ENCODE measurements at regions of chr12 and their contacts with region 1.

Region 1: GRCh38 chr12:106223485-106224354 is 24.1 kb downstream of the CKAP4 start:
- DNase-seq: peak; percentile 85
- ATAC-seq: peak; percentile 85
- H3K4me3 Mint-ChIP-seq: no peak overlapping the region
- H3K27ac Mint-ChIP-seq: no peak overlapping the region
- H3K4me1 Mint-ChIP-seq: peaks cover 14% of the 10 kb centered on the region
- H3K27me3 Mint-ChIP-seq: no peaks in the 10 kb centered on the region

Region 2: GRCh38 chr12:105420659-105421240 is 803.0 kb before region 1 on chr12:
- CTCF ChIA-PET with region 1: interaction called, 4 read pairs
- POLR2A ChIA-PET with region 1: no interaction called
- intact Hi-C with region 1: loop called (anchors 1 to 2 kb)
- DNase-seq: peak; percentile 83
- ATAC-seq: peak; percentile 73
- H3K4me3 Mint-ChIP-seq: no peak overlapping the region
- H3K27ac Mint-ChIP-seq: no peak overlapping the region
- H3K4me1 Mint-ChIP-seq: peaks cover 13% of the 10 kb centered on the region
- H3K27me3 Mint-ChIP-seq: peaks cover under 1% of the 10 kb centered on the region

Region 3: DNA sequence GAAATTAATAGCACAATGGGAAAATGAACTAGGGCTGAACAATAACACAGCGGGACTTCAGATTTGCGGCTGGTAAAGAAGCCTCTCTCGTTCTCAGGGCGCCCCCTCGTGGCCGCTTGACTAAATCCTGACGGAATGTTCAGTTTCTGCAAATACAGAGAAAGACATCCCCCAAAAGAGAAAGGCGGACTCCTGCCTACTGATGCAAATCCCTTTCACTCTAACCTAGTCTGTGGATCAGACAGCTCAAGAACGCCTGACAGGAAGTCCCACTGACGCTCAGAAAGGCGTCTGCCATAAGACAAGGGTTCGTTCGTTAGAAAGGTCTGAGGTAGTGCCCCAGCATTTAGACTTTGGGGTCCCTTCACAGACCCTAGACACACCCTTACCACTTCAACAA is 87.5 kb before region 1 on chr12:
- CTCF ChIA-PET with region 1: no interaction called
- POLR2A ChIA-PET with region 1: no interaction called
- intact Hi-C with region 1: no loop called
- DNase-seq: peak; percentile 88
- ATAC-seq: peak; percentile 47
- H3K4me3 Mint-ChIP-seq: no peak overlapping the region
- H3K27ac Mint-ChIP-seq: no peak overlapping the region
- H3K4me1 Mint-ChIP-seq: peaks cover 7% of the 10 kb centered on the region
- H3K27me3 Mint-ChIP-seq: peaks cover 62% of the 10 kb centered on the region

Region 4: DNA sequence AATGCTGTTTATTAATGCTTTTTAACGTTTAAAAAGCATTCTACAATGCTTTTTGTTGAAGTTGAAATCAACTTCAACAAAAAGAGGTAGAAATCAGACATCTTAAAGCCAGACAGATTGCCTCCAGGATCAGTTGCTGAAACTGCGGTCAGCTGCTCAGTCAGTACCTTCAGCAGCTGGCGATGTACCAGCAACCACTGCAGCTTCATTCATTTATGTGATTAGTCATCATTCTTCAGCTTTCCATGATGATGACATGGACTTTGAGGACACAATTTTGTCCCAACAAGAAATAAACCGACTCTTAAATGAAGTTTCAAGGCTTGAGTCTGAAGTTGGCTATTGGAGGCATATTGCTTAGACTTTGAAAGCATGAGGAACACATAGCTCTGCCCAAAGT is 53.4 kb before region 1 on chr12:
- CTCF ChIA-PET with region 1: interaction called, 10 read pairs
- POLR2A ChIA-PET with region 1: no interaction called
- intact Hi-C with region 1: loop called in 1 of 2 experiments (anchors 2 kb)
- DNase-seq: no peak
- ATAC-seq: no peak
- H3K4me3 Mint-ChIP-seq: no peak overlapping the region
- H3K27ac Mint-ChIP-seq: no peak overlapping the region
- H3K4me1 Mint-ChIP-seq: peaks cover 7% of the 10 kb centered on the region
- H3K27me3 Mint-ChIP-seq: peaks cover 18% of the 10 kb centered on the region

Region 5: DNA sequence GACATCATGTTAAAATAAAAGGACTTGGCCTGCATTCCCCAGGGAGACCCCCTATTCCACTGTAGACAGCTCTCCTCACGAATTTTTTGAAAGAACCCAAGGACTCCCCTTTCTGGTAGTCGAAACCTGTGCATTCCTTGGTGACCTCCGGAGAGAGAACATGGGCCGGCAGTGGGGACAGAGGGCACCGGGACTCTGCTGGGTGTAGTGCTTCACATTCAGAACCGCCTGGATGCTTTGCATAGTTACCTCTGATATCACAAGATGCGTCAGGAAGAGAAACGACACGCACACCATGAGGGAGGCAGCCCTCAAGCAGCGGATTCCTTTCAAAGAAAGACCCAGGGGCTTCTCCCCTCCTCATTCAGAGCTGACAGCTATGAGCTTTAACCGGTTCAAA is 14.4 kb after region 1 on chr12:
- CTCF ChIA-PET with region 1: interaction called, 15 read pairs
- POLR2A ChIA-PET with region 1: no interaction called
- intact Hi-C with region 1: no loop called
- DNase-seq: no peak
- ATAC-seq: no peak
- H3K4me3 Mint-ChIP-seq: no peak overlapping the region
- H3K27ac Mint-ChIP-seq: no peak overlapping the region
- H3K4me1 Mint-ChIP-seq: no peaks in the 10 kb centered on the region
- H3K27me3 Mint-ChIP-seq: no peaks in the 10 kb centered on the region

Region 6: GRCh38 chr12:106282457-106283097 is 58.9 kb after region 1 on chr12:
- CTCF ChIA-PET with region 1: interaction called, 85 read pairs
- POLR2A ChIA-PET with region 1: no interaction called
- intact Hi-C with region 1: loop called (anchors 1 kb)
- DNase-seq: peak; percentile 72
- ATAC-seq: peak; percentile 83
- H3K4me3 Mint-ChIP-seq: no peak overlapping the region
- H3K27ac Mint-ChIP-seq: no peak overlapping the region
- H3K4me1 Mint-ChIP-seq: peaks cover 11% of the 10 kb centered on the region
- H3K27me3 Mint-ChIP-seq: peaks cover 1% of the 10 kb centered on the region

Measured in activated CD4-positive, alpha-beta T cell treated with anti-CD3 and anti-CD28 coated beads for 36 hours (primary cell).